ENCODE measurements at regions of chr20 and their contacts with region 1.

Region 1: DNA sequence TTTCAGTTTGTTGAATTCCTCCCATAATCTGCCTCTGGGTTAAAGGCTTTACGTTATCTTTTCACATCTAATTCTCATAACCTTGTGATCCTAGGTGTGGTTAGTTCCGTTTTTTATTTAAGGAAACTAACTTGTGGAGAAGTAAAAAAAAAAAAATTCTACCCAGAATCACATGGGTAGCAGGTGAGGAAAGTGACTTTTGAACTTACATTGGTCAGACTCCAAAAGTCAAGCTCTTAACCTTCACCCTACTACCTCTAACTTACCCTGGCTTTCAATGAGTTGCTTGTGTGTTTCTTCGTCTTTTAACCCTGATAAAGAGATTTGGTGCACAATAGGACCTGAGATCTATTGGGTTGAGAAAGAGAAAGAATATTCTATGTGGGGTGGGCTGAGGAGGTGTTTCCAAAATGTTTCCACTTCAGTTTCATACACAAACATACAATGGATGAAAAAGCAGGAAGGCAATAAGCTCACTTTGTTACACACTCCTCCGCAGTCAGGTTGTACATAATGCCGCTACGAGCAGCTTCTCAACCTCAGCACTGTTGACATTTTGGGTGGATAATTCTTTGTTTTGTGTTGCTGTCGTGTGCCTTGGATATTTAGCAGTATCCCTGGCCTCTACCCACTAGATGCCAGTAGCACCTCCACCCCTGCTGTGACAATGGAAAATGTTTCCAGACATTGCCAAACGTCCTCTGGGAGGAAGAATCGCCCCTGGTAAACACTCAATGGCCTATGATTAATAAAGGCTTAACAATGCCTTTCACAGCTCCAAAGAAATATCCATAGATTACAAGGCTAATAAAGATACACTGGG is 193.0 kb upstream of the ZNF217 start:
- DNase-seq: peak; percentile 71
- ATAC-seq: peak; percentile 46
- H3K4me3 ChIP-seq: peak overlapping the region; percentile 27
- H3K27ac ChIP-seq: peak overlapping the region; percentile 87
- H3K4me1 ChIP-seq: peaks cover 58% of the 10 kb centered on the region
- H3K27me3 ChIP-seq: no peaks in the 10 kb centered on the region
- CTCF ChIP-seq: peak; percentile 39

Region 2: GRCh38 chr20:53578492-53579222 is 208.0 kb before region 1 on chr20:
- CTCF ChIA-PET with region 1: interaction called, 3 read pairs
- POLR2A ChIA-PET with region 1: no interaction called
- intact Hi-C with region 1: loop called (anchors 1 kb)
- DNase-seq: peak; percentile 100
- ATAC-seq: peak; percentile 12
- H3K4me3 ChIP-seq: peak overlapping the region; percentile 75
- H3K27ac ChIP-seq: peak overlapping the region; percentile 88
- H3K4me1 ChIP-seq: peaks cover 59% of the 10 kb centered on the region
- H3K27me3 ChIP-seq: no peaks in the 10 kb centered on the region
- CTCF ChIP-seq: peak; percentile 99

Region 3: GRCh38 chr20:53652090-53652858 is 134.4 kb before region 1 on chr20:
- CTCF ChIA-PET with region 1: no interaction called
- POLR2A ChIA-PET with region 1: no interaction called
- intact Hi-C with region 1: no loop called
- DNase-seq: no peak
- ATAC-seq: no peak
- H3K4me3 ChIP-seq: no peak overlapping the region
- H3K27ac ChIP-seq: no peak overlapping the region
- H3K4me1 ChIP-seq: peaks cover 22% of the 10 kb centered on the region
- H3K27me3 ChIP-seq: no peaks in the 10 kb centered on the region
- CTCF ChIP-seq: no peak

Region 4: GRCh38 chr20:53805895-53806384 is 19.3 kb after region 1 on chr20:
- CTCF ChIA-PET with region 1: interaction called, 4 read pairs
- POLR2A ChIA-PET with region 1: no interaction called
- intact Hi-C with region 1: loop called (anchors 1 kb)
- DNase-seq: peak; percentile 100
- ATAC-seq: peak; percentile 82
- H3K4me3 ChIP-seq: no peak overlapping the region
- H3K27ac ChIP-seq: peak overlapping the region; percentile 89
- H3K4me1 ChIP-seq: peaks cover 50% of the 10 kb centered on the region
- H3K27me3 ChIP-seq: no peaks in the 10 kb centered on the region
- CTCF ChIP-seq: no peak

Region 5: DNA sequence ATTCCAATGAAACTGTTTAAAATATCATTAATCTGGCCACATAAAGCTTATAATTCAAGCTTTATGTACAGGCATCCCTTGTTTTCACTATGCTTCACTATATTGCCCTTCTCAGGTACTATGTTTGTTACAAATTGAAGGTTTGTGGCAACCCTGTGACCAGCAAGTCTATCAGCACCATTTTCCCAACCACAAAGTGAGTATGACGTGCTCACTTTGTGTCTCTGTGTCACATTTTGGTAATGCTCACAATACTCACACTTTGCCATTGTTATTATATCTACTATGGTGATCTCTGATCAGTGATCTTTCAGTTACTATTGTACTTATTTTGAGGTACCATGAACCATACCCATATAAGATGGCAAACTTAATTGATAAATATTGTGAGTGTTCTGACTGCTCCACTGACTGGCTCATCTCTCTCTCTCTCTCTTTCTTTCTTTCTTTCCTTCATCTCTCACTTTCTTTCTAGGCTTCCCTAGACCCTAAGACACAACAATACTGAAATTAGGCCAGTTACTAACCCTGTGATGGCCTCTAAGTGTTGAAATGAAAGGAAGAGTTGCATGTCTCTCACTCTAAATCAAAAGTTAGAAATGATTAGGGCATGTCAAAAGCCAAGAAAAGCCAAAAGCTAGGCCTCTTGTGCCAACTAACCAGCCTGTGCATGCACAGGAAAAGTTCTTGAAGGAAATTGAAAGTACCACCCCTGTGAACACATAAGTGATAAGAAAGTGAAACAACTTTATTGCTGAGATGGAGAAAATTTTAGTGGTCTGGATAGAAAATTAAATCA is 55.8 kb after region 1 on chr20:
- CTCF ChIA-PET with region 1: no interaction called
- POLR2A ChIA-PET with region 1: no interaction called
- intact Hi-C with region 1: loop called (anchors 1 kb)
- DNase-seq: no peak
- ATAC-seq: no peak
- H3K4me3 ChIP-seq: no peak overlapping the region
- H3K27ac ChIP-seq: no peak overlapping the region
- H3K4me1 ChIP-seq: peaks cover 38% of the 10 kb centered on the region
- H3K27me3 ChIP-seq: no peaks in the 10 kb centered on the region
- CTCF ChIP-seq: no peak

Region 6: GRCh38 chr20:53857723-53858236 is 71.1 kb after region 1 on chr20:
- CTCF ChIA-PET with region 1: no interaction called
- POLR2A ChIA-PET with region 1: no interaction called
- intact Hi-C with region 1: no loop called
- DNase-seq: no peak
- ATAC-seq: no peak
- H3K4me3 ChIP-seq: no peak overlapping the region
- H3K27ac ChIP-seq: no peak overlapping the region
- H3K4me1 ChIP-seq: no peaks in the 10 kb centered on the region
- H3K27me3 ChIP-seq: no peaks in the 10 kb centered on the region
- CTCF ChIP-seq: no peak

Region 7: GRCh38 chr20:53899351-53900167 is 112.9 kb after region 1 on chr20:
- CTCF ChIA-PET with region 1: no interaction called
- POLR2A ChIA-PET with region 1: interaction called, 4 read pairs
- intact Hi-C with region 1: loop called (anchors 1 kb)
- DNase-seq: peak; percentile 100
- ATAC-seq: peak; percentile 88
- H3K4me3 ChIP-seq: no peak overlapping the region
- H3K27ac ChIP-seq: peak overlapping the region; percentile 79
- H3K4me1 ChIP-seq: peaks cover 41% of the 10 kb centered on the region
- H3K27me3 ChIP-seq: no peaks in the 10 kb centered on the region
- CTCF ChIP-seq: no peak

Region 8: GRCh38 chr20:53926428-53927028 is 139.9 kb after region 1 on chr20:
- CTCF ChIA-PET with region 1: no interaction called
- POLR2A ChIA-PET with region 1: interaction called, 13 read pairs
- intact Hi-C with region 1: no loop called
- DNase-seq: peak; percentile 100
- ATAC-seq: peak; percentile 95
- H3K4me3 ChIP-seq: peak overlapping the region; percentile 26; the same call in 1 of the 2 replicates
- H3K27ac ChIP-seq: peak overlapping the region; percentile 88
- H3K4me1 ChIP-seq: peaks cover 46% of the 10 kb centered on the region
- H3K27me3 ChIP-seq: no peaks in the 10 kb centered on the region
- CTCF ChIP-seq: no peak

Region 9: DNA sequence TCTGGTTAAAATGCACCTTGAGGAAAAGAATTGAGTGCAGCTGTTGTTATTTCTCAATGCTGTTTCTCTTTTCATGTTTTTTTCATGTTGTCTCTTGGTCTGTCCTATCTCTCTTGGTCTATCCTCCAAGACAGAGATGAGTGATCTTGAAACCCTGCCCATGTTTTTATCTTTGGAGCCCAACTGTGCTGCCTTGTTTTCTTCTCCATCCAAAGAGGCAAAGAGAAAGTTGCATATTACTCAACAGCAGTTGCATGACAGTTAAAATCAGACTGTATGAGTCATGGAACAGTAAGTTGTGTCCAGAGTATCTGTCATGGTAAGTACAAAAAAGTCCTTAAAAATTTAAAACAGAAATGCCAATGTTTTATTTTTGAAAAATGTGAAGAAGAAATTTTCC is 257.5 kb after region 1 on chr20:
- CTCF ChIA-PET with region 1: no interaction called
- POLR2A ChIA-PET with region 1: no interaction called
- intact Hi-C with region 1: no loop called
- DNase-seq: peak; percentile 55
- ATAC-seq: peak; percentile 37; the same call in 1 of the 2 replicates
- H3K4me3 ChIP-seq: no peak overlapping the region
- H3K27ac ChIP-seq: no peak overlapping the region
- H3K4me1 ChIP-seq: no peaks in the 10 kb centered on the region
- H3K27me3 ChIP-seq: peaks cover 26% of the 10 kb centered on the region
- CTCF ChIP-seq: no peak

Region 10: GRCh38 chr20:54389596-54390280 is 603.1 kb after region 1 on chr20:
- CTCF ChIA-PET with region 1: no interaction called
- POLR2A ChIA-PET with region 1: no interaction called
- intact Hi-C with region 1: no loop called
- DNase-seq: no peak
- ATAC-seq: no peak
- H3K4me3 ChIP-seq: no peak overlapping the region
- H3K27ac ChIP-seq: no peak overlapping the region
- H3K4me1 ChIP-seq: no peaks in the 10 kb centered on the region
- H3K27me3 ChIP-seq: peaks cover 43% of the 10 kb centered on the region
- CTCF ChIP-seq: no peak

Measured in PC-3 (cell line).